Endothelial cell of umbilical vein (primary cell): ENCODE measurements at regions of chr17 and their contacts with region 1.

Region 1: GRCh38 chr17:28763804-28764266 is 20.0 kb downstream of the TRAF4 start:
- DNase-seq: peak; percentile 79
- H3K4me3 ChIP-seq: no peak overlapping the region
- H3K27ac ChIP-seq: no peak overlapping the region
- H3K4me1 ChIP-seq: peaks cover 16% of the 10 kb centered on the region
- H3K27me3 ChIP-seq: no peaks in the 10 kb centered on the region
- CTCF ChIP-seq: peak; percentile 66 to 75
- POLR2A ChIP-seq: no peak

Region 2: GRCh38 chr17:28714281-28714680 is 49.6 kb before region 1 on chr17:
- CTCF ChIA-PET with region 1: no interaction called
- POLR2A ChIA-PET with region 1: no interaction called
- dilution Hi-C with region 1: no loop called
- intact Hi-C with region 1: no loop called
- DNase-seq: no peak
- H3K4me3 ChIP-seq: no peak overlapping the region
- H3K27ac ChIP-seq: no peak overlapping the region
- H3K4me1 ChIP-seq: peaks cover 24% of the 10 kb centered on the region
- H3K27me3 ChIP-seq: no peaks in the 10 kb centered on the region
- CTCF ChIP-seq: no peak
- POLR2A ChIP-seq: no peak

Region 3: GRCh38 chr17:28744104-28744971 is 19.5 kb before region 1 on chr17:
- CTCF ChIA-PET with region 1: interaction called, 46 read pairs
- POLR2A ChIA-PET with region 1: interaction called, 3 read pairs
- dilution Hi-C with region 1: no loop called
- intact Hi-C with region 1: no loop called
- DNase-seq: peak; percentile 51
- H3K4me3 ChIP-seq: peak overlapping the region; percentile 77 to 94 (median 86)
- H3K27ac ChIP-seq: peak overlapping the region; percentile 86
- H3K4me1 ChIP-seq: peaks cover 28% of the 10 kb centered on the region
- H3K27me3 ChIP-seq: no peaks in the 10 kb centered on the region
- CTCF ChIP-seq: no peak
- POLR2A ChIP-seq: no peak

Region 4: DNA sequence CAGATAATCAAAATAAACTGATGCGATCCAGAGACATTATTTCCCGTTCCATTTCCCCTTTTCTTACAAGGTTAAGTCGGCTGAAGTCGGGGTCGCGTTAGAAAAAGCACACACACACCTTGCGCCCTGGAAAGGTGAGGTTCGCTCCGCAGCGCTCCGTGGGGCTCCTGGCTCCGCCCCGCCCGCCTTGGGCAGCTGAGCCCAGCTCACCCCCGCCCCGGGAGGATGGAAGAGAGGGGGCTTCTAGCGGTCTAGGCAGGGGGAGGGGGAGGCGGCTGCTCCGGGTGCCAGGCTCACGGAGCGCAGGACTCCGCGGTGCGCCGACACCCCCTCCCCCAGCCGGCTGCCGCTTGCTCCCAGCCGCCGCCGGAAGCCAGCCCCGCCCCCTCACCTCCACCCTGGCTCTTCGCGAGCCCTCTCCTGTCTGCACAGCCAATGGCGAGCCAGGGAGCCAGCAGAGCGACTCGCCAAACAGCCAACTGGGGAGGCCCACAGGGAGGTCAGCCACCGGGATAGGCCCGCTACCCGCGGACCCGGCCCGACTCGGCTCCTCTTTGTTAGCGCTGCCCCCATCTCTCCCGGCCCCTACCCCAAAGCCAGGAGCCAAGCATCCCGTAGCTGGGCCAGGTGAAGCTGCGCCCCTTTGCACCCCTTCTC is 48.4 kb after region 1 on chr17:
- CTCF ChIA-PET with region 1: interaction called, 44 read pairs
- POLR2A ChIA-PET with region 1: no interaction called
- dilution Hi-C with region 1: no loop called
- intact Hi-C with region 1: loop called (anchors 1 kb)
- DNase-seq: peak; percentile 97
- H3K4me3 ChIP-seq: peak overlapping the region; percentile 90 to 98 (median 95)
- H3K27ac ChIP-seq: peak overlapping the region; percentile 95
- H3K4me1 ChIP-seq: peaks cover 44% of the 10 kb centered on the region
- H3K27me3 ChIP-seq: no peaks in the 10 kb centered on the region
- CTCF ChIP-seq: no peak
- POLR2A ChIP-seq: peak; percentile 74

Region 5: DNA sequence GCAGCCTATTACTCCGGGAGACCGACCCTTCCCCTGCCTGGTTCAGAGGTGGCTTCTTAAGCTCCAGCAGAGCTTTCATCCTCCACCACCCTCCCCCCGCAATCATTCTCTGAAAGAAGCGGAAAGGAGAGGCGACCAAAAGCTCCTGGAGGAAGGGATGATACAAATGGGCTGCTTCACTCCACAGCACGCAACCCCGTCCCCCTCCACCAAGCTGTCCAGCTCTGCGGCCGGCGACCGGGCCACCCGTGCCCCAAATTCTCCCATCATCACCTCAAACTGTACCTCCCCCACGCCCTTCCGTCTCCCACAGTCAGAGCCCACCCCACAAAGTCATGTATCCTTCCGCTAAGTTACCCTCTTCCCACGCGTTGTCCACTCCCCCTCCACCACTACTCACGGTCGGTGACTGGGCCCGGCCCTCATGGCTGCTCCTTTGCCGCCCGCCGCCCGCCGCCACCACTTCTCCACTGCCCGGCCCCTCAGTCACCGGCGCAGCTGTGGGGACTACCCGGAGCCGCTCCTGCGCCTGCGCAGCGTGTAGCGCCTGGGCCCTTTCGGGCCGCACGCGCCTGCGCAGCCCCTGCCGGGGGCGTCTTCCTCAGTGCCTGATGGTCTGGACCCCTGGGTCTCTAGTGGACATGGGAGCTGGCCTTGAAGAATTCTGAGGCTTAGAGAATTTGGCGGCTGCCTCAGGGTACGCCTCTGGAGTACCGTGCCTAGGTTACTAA is 78.6 kb after region 1 on chr17 and contains the start of gene FAM222B:
- CTCF ChIA-PET with region 1: interaction called, 130 read pairs
- POLR2A ChIA-PET with region 1: interaction called, 8 read pairs
- dilution Hi-C with region 1: no loop called
- intact Hi-C with region 1: loop called (anchors 1 kb)
- DNase-seq: peak; percentile 87
- H3K4me3 ChIP-seq: peak within 1 kb of the TSS; percentile 38 to 70 (median 65)
- H3K27ac ChIP-seq: peak within 1 kb of the TSS; percentile 54
- H3K4me1 ChIP-seq: peaks cover 19% of the 10 kb centered on the region
- H3K27me3 ChIP-seq: no peaks in the 10 kb centered on the region
- CTCF ChIP-seq: no peak
- POLR2A ChIP-seq: peak; percentile 72
- total RNA-seq, gene FAM222B: 30.6 and 33.7 TPM in 2 replicates

Region 6: GRCh38 chr17:28878981-28879380 is 115.1 kb after region 1 on chr17:
- CTCF ChIA-PET with region 1: interaction called, 47 read pairs
- POLR2A ChIA-PET with region 1: no interaction called
- dilution Hi-C with region 1: no loop called
- intact Hi-C with region 1: no loop called
- DNase-seq: peak; percentile 33
- H3K4me3 ChIP-seq: no peak overlapping the region
- H3K27ac ChIP-seq: no peak overlapping the region
- H3K4me1 ChIP-seq: no peaks in the 10 kb centered on the region
- H3K27me3 ChIP-seq: no peaks in the 10 kb centered on the region
- CTCF ChIP-seq: peak; percentile 10 to 47
- POLR2A ChIP-seq: no peak

Region 7: DNA sequence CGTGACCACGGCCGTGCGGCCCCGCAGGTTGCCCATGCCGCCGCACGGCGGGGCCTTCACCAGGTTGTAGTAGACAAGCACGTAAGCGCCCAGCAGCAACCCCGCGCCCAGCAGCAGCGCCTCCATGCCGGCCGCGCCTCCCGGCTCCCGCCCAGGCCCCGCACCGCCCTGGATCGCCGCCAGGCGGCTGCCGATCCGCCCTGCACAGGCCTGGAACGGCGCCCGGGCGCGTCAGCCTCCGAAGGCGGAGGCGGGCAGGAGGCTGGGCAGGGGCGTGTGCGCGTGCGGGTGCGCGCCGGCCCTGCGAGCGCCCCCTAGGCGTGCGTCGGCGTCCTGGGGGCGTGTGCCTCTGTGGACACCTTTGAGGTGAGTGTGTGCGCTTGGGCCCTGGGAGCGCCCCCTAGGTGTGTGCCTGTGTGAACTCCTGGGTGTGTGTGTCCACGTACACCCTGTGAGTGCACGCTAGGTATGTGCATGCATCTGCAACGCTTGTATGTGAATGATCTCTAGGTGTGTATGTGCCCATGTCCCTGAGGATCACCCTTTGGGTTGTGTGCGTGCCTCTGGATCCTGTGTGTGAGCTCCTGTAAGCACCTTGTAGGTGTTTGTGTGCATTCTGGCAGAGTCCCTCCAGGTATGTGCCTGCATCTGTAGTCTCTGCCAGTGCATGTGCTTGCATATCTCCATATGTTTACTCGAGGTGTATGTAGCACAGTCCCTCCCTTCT is 139.1 kb after region 1 on chr17 and contains the start of gene DHRS13:
- CTCF ChIA-PET with region 1: interaction called, 62 read pairs
- POLR2A ChIA-PET with region 1: no interaction called
- dilution Hi-C with region 1: no loop called
- intact Hi-C with region 1: loop called (anchors 1 kb)
- DNase-seq: peak; percentile 93
- H3K4me3 ChIP-seq: peak within 1 kb of the TSS; percentile 45 to 67 (median 59)
- H3K27ac ChIP-seq: peak within 1 kb of the TSS; percentile 15
- H3K4me1 ChIP-seq: peaks cover 13% of the 10 kb centered on the region
- H3K27me3 ChIP-seq: no peaks in the 10 kb centered on the region
- CTCF ChIP-seq: peak; percentile 87 to 99
- POLR2A ChIP-seq: no peak
- total RNA-seq, gene DHRS13: 5.6 and 7.2 TPM in 2 replicates

Region 8: DNA sequence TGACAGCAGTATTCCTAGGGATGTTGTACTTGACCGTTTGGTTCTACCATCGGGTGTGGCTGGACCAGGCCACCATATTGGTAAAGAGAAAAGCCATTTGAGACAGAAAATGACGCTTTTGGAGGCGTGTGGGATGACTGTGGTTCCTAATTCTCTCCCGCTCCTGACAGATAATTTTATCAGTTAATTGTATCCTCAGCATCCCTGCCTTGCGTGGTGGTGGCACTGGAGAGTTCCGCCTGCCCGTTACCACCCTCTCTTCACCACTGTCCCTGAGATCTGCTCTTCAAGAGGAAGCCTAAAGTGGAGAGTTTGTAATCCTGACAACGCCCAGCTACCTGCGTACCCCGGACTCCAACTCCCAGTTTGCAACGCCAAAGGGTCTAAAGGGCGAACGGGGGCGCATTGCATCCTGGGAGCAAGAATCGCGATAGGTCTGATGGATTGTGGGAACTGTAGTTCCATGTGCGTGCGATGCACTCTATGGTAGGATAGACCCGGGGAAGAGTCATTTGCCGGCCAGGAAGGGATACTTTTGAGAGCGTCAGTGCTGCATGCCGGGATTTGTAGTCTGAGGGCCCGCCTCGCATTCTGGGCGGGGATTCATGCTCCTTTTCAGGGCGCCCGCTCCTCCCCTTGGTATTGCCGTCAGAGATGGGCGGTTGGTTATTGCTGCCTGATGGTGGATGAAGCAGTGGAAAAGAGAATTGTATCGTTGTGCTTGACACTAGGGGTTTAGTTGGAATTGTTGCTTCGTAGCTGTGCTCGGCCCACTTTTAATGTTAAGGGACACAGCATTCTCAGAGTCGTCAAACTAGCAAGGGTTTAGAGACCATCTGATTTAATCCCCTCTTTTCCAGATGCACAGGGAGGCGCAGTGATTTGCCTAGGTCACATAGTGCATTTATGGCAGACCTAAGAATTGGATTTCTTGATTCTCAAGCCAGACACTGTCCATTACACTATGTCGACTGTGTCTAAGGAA is 188.4 kb after region 1 on chr17:
- CTCF ChIA-PET with region 1: interaction called, 22 read pairs
- POLR2A ChIA-PET with region 1: no interaction called
- dilution Hi-C with region 1: no loop called
- intact Hi-C with region 1: no loop called
- DNase-seq: peak; percentile 100
- H3K4me3 ChIP-seq: peak overlapping the region in 2 of 3 experiments; percentile 65 to 72
- H3K27ac ChIP-seq: peak overlapping the region; percentile 80
- H3K4me1 ChIP-seq: peaks cover 17% of the 10 kb centered on the region
- H3K27me3 ChIP-seq: no peaks in the 10 kb centered on the region
- CTCF ChIP-seq: no peak
- POLR2A ChIP-seq: peak; percentile 17